MCF 10A (cell line): ENCODE measurements at regions of chr22 and their contacts with region 1.

Region 1: DNA sequence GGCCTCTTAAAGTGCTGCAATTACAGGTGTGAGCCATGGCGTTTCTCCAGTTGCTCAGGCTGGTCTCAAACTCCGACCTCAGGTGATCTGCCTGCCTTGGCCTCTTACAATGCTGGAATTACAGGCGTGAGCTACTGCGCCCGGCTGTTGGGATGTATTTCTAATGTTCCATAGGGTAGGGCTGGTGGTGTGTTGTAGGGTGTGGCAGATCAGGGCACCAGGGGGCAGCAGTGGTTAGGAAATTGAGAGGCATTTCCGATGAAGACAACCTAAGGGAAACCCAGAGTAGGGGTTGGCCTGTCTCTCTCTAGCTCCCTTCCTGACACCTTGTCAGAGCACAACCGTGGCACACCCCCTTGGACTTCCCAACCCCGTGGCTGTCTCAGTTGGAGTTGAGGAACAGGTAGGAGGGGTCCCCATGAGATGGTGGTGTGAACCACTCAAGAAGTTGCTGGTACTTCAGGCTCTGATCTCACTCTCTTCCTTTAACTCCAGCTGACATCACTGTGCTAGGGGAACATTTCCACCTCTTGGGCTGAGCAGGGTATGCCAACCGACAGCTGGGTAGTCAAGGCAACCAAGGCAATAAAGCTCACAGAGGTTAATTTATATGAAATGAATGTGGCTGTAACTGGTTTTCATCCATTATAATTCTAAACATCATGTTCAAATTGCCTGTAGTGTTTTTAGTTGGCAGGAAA is 33.0 kb downstream of the YWHAH start:
- DNase-seq: peak; percentile 82
- H3K4me3 Mint-ChIP-seq: no peak overlapping the region
- H3K27ac Mint-ChIP-seq: no peak overlapping the region
- H3K4me1 Mint-ChIP-seq: no peaks in the 10 kb centered on the region
- H3K27me3 Mint-ChIP-seq: no peaks in the 10 kb centered on the region
- CTCF ChIP-seq: peak; percentile 83

Region 2: GRCh38 chr22:32050678-32051515 is 73.6 kb after region 1 on chr22:
- CTCF ChIA-PET with region 1: interaction called, 12 read pairs
- POLR2A ChIA-PET with region 1: no interaction called
- intact Hi-C with region 1: no loop called
- DNase-seq: peak; percentile 97
- H3K4me3 Mint-ChIP-seq: no peak overlapping the region
- H3K27ac Mint-ChIP-seq: peak overlapping the region; percentile 77
- H3K4me1 Mint-ChIP-seq: peaks cover 16% of the 10 kb centered on the region
- H3K27me3 Mint-ChIP-seq: peaks cover 3% of the 10 kb centered on the region
- CTCF ChIP-seq: no peak

Region 3: GRCh38 chr22:32080904-32081303 is 103.6 kb after region 1 on chr22:
- CTCF ChIA-PET with region 1: interaction called, 174 read pairs
- POLR2A ChIA-PET with region 1: interaction called, 3 read pairs
- intact Hi-C with region 1: loop called (anchors 1 kb)
- DNase-seq: peak; percentile 76
- H3K4me3 Mint-ChIP-seq: no peak overlapping the region
- H3K27ac Mint-ChIP-seq: no peak overlapping the region
- H3K4me1 Mint-ChIP-seq: no peaks in the 10 kb centered on the region
- H3K27me3 Mint-ChIP-seq: peaks cover 27% of the 10 kb centered on the region
- CTCF ChIP-seq: peak; percentile 83

Region 4: DNA sequence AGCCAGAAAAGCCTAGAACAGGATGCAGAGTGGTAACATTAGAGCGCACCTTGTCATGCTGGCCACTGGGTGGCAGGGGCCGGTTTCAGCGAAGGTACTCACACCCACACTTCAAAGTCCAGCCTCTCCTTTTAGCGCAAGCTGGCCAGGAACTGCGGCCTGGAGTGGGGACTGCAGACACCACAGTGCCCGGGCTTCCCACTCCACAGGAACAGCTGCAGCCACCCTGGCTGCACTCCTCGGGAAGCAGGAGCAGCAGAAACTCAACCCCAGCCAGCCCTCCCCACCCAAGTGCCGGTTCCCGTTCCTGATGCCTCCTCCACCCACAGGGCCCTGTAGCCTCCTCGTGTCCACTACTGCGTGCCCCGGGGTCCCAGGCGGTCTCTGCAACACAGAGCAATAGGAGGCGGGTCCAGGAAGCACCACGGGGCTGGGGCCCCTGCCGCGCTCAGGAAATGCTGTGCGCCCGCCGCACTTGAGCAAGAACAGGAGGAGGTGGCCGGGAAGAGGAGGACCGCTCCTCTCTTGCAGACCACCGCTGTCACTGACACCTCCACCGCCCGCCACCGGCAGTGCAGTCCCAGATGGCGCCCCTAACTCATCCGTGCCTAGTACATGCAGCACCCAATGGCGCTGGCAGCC is 225.4 kb after region 1 on chr22:
- CTCF ChIA-PET with region 1: interaction called, 5 read pairs
- POLR2A ChIA-PET with region 1: no interaction called
- intact Hi-C with region 1: loop called (anchors 1 kb)
- DNase-seq: peak; percentile 64
- H3K4me3 Mint-ChIP-seq: no peak overlapping the region
- H3K27ac Mint-ChIP-seq: no peak overlapping the region
- H3K4me1 Mint-ChIP-seq: peaks cover 6% of the 10 kb centered on the region
- H3K27me3 Mint-ChIP-seq: peaks cover 17% of the 10 kb centered on the region
- CTCF ChIP-seq: peak; percentile 61

Region 5: GRCh38 chr22:32265882-32266767 is 288.8 kb after region 1 on chr22:
- CTCF ChIA-PET with region 1: interaction called, 17 read pairs
- POLR2A ChIA-PET with region 1: interaction called, 3 read pairs
- intact Hi-C with region 1: loop called (anchors 1 kb)
- DNase-seq: peak; percentile 82
- H3K4me3 Mint-ChIP-seq: peak overlapping the region; percentile 41
- H3K27ac Mint-ChIP-seq: no peak overlapping the region
- H3K4me1 Mint-ChIP-seq: peaks cover 8% of the 10 kb centered on the region
- H3K27me3 Mint-ChIP-seq: peaks cover 6% of the 10 kb centered on the region
- CTCF ChIP-seq: peak; percentile 90

Region 6: GRCh38 chr22:32354360-32355351 is 377.4 kb after region 1 on chr22:
- CTCF ChIA-PET with region 1: no interaction called
- POLR2A ChIA-PET with region 1: no interaction called
- intact Hi-C with region 1: no loop called
- DNase-seq: no peak
- H3K4me3 Mint-ChIP-seq: no peak overlapping the region
- H3K27ac Mint-ChIP-seq: no peak overlapping the region
- H3K4me1 Mint-ChIP-seq: no peaks in the 10 kb centered on the region
- H3K27me3 Mint-ChIP-seq: peaks cover 56% of the 10 kb centered on the region
- CTCF ChIP-seq: no peak

Region 7: GRCh38 chr22:32378707-32379272 is 401.5 kb after region 1 on chr22:
- CTCF ChIA-PET with region 1: interaction called, 5 read pairs
- POLR2A ChIA-PET with region 1: no interaction called
- intact Hi-C with region 1: loop called (anchors 5 kb)
- DNase-seq: peak; percentile 72
- H3K4me3 Mint-ChIP-seq: no peak overlapping the region
- H3K27ac Mint-ChIP-seq: no peak overlapping the region
- H3K4me1 Mint-ChIP-seq: no peaks in the 10 kb centered on the region
- H3K27me3 Mint-ChIP-seq: peaks cover 29% of the 10 kb centered on the region
- CTCF ChIP-seq: peak; percentile 71

Region 8: DNA sequence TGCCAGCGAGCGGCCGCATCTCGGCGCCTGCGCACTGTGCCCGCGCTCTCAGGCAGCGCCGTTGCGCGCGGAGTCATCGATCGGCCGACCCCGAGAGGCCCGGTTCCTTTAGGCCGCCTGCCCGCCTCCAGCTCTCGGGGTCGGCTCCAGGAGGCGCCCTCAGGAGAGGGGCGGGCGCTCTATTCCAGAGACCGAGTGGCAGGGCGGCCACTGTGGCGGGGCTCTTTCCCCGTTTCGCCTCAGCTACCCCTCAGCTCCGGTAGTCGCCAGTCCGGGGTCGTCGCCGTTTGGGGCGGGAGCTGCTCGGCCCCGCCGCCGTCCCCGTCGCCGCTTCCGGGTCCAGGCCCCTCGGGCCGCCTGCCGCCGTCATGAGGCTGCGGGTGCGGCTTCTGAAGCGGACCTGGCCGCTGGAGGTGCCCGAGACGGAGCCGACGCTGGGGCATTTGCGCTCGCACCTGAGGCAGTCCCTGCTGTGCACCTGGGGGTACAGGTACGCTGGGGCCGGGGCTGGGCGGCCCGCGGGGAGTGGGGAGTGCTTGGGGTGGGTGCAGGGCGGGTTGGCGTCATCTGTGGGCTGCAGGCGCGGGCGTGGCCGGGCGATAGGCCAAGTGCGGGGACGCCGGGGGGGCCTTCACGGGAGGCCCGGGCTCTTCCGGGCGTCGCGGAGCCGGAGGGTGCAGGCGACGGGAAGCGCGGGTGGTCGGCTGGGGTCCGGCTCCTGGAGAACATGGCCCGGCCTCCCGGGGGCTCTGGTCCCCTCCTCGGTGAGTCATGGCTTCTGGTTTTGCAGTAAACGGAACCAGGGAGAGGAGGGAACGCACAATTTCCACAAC is 497.6 kb after region 1 on chr22 and contains the start of gene FBXO7:
- CTCF ChIA-PET with region 1: interaction called, 3 read pairs
- POLR2A ChIA-PET with region 1: no interaction called
- intact Hi-C with region 1: loop called (anchors 2 kb)
- DNase-seq: peak; percentile 89
- H3K4me3 Mint-ChIP-seq: peak within 1 kb of the TSS; percentile 98
- H3K27ac Mint-ChIP-seq: peak within 1 kb of the TSS; percentile 96
- H3K4me1 Mint-ChIP-seq: peaks cover 12% of the 10 kb centered on the region
- H3K27me3 Mint-ChIP-seq: no peaks in the 10 kb centered on the region
- CTCF ChIP-seq: peak; percentile 13
- total RNA-seq, gene FBXO7: 59.8 and 76.9 TPM in 2 replicates